IMR-90 (cell line): ENCODE measurements at regions of chr15 and their contacts with region 1.

Region 1: DNA sequence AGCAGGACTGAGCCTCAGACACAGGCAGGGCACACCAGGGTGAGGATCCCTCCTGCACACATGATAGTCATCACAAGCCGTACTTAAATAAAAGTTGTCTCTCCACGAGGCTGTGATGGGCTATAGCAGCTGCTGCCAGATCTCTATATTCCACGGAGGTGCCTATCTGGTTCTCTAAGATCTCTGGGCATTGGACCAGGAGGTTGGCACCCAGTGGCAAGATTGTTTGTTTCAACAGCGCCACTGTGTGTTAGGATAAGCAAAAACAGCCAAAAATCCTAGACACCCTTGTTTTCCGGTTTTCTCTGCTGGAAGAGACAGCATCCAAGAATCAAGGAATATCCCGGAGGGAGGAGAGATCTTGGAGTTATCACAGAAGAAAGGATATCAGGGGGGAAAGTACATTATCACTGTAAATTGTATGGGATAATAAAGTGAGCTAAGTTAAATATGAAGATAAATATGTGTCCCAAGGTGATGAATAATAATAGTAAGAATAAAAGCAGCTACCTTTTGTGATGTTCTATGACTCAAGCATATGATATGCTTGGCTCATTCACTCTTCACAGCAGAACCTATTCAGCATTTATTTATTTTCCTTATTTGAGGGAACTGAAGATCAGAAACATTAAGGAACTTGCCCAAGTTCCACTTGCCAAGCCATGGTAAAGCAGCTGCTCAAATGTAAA is 90.6 kb upstream of the AKAP13 start:
- DNase-seq: peak; percentile 31
- ATAC-seq: peak; percentile 59
- H3K4me3 ChIP-seq: no peak overlapping the region
- H3K27ac ChIP-seq: no peak overlapping the region
- H3K4me1 ChIP-seq: no peaks in the 10 kb centered on the region
- H3K27me3 ChIP-seq: peaks cover 3% of the 10 kb centered on the region; the same call in 1 of the 2 replicates
- CTCF ChIP-seq: peak; percentile 59
- POLR2A ChIP-seq: no peak
- RAD21 ChIP-seq: peak; percentile 58; the same call in 1 of the 2 replicates

Region 2: GRCh38 chr15:85443593-85444087 is 153.8 kb after region 1 on chr15:
- CTCF ChIA-PET with region 1: no interaction called
- POLR2A ChIA-PET with region 1: no interaction called
- dilution Hi-C with region 1: no loop called
- in situ Hi-C with region 1: no loop called
- intact Hi-C with region 1: no loop called
- DNase-seq: peak; percentile 33
- ATAC-seq: no peak
- H3K4me3 ChIP-seq: no peak overlapping the region
- H3K27ac ChIP-seq: no peak overlapping the region
- H3K4me1 ChIP-seq: peaks cover 2% of the 10 kb centered on the region; the same call in 1 of the 2 replicates
- H3K27me3 ChIP-seq: no peaks in the 10 kb centered on the region
- CTCF ChIP-seq: 0 out of 2 replicates have a peak, but pooled peaks have one; percentile 1
- POLR2A ChIP-seq: no peak
- RAD21 ChIP-seq: no peak

Region 3: DNA sequence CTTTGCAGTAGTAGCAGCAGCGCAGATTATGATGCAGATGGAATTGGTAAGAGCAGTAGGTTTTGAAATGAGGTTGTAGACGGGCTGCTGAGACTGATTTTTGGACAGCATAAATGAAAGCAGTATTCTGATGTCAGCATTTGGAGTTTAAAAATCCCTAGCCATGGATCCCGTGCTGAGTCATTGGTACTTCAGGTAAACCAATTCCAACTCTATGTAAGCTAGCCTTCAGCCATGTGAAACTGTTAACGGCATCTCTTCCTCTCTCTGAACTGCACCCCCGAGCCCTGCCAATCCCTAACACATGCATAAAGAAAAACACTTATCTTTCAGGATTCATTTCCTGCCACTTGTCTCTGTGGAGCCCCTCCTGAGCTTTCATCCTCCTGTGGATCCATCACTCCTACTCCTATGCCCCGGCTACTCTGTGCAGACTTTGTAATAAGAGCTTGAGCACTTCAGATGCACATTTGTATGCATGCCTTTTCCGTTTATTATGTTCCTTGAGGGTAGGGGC is 209.6 kb after region 1 on chr15:
- CTCF ChIA-PET with region 1: no interaction called
- POLR2A ChIA-PET with region 1: no interaction called
- dilution Hi-C with region 1: no loop called
- in situ Hi-C with region 1: loop called (anchors 5 kb)
- intact Hi-C with region 1: no loop called
- DNase-seq: peak; percentile 28
- ATAC-seq: no peak
- H3K4me3 ChIP-seq: no peak overlapping the region
- H3K27ac ChIP-seq: no peak overlapping the region
- H3K4me1 ChIP-seq: peaks cover 8% of the 10 kb centered on the region
- H3K27me3 ChIP-seq: no peaks in the 10 kb centered on the region
- CTCF ChIP-seq: no peak
- POLR2A ChIP-seq: no peak
- RAD21 ChIP-seq: no peak